Activated CD8-positive, alpha-beta memory T cell treated with anti-CD3 and anti-CD28 coated beads, Interleukin-2, amount 10 ng/mL, durations not matched to agents 7 days and 5 days (primary cell): ENCODE measurements at regions of chr19 and their contacts with region 1.

Region 1: GRCh38 chr19:11482384-11483050 is 1.7 kb upstream of the ELAVL3 start:
- DNase-seq: peak; percentile 91
- ATAC-seq: peak; percentile 79
- H3K4me3 Mint-ChIP-seq: peak overlapping the region; percentile 60
- H3K27ac Mint-ChIP-seq: peak overlapping the region; percentile 77
- H3K4me1 Mint-ChIP-seq: peaks cover 20% of the 10 kb centered on the region
- H3K27me3 Mint-ChIP-seq: peaks cover 25% of the 10 kb centered on the region

Region 2: GRCh38 chr19:11374433-11375142 is 107.9 kb before region 1 on chr19 and contains the start of gene SWSAP1:
- CTCF ChIA-PET with region 1: interaction called, 38 read pairs
- DNase-seq: peak; percentile 99
- ATAC-seq: peak; percentile 92
- H3K4me3 Mint-ChIP-seq: no peak within 1 kb of the TSS
- H3K27ac Mint-ChIP-seq: no peak within 1 kb of the TSS
- H3K4me1 Mint-ChIP-seq: peaks cover 29% of the 10 kb centered on the region
- H3K27me3 Mint-ChIP-seq: no peaks in the 10 kb centered on the region
- total RNA-seq, gene SWSAP1: 2.6 to 3.9 TPM

Region 3: GRCh38 chr19:11422163-11423021 is 60.1 kb before region 1 on chr19:
- CTCF ChIA-PET with region 1: interaction called, 14 read pairs
- DNase-seq: peak; percentile 92
- ATAC-seq: peak; percentile 73
- H3K4me3 Mint-ChIP-seq: peak overlapping the region; percentile 59
- H3K27ac Mint-ChIP-seq: no peak overlapping the region
- H3K4me1 Mint-ChIP-seq: peaks cover 28% of the 10 kb centered on the region
- H3K27me3 Mint-ChIP-seq: peaks cover 61% of the 10 kb centered on the region

Region 4: GRCh38 chr19:11435058-11435832 is 47.3 kb before region 1 on chr19 and contains the starts of genes ODAD3 and PRKCSH:
- CTCF ChIA-PET with region 1: interaction called, 13 read pairs
- DNase-seq: peak; percentile 99
- ATAC-seq: peak; percentile 95
- H3K4me3 Mint-ChIP-seq: peak within 1 kb of the TSS; percentile 100
- H3K27ac Mint-ChIP-seq: peak within 1 kb of the TSS; percentile 96
- H3K4me1 Mint-ChIP-seq: peaks cover 25% of the 10 kb centered on the region
- H3K27me3 Mint-ChIP-seq: peaks cover 4% of the 10 kb centered on the region
- total RNA-seq, gene ODAD3: 0.15 to 0.54 TPM
- total RNA-seq, gene PRKCSH: 278 to 306 TPM

Region 5: DNA sequence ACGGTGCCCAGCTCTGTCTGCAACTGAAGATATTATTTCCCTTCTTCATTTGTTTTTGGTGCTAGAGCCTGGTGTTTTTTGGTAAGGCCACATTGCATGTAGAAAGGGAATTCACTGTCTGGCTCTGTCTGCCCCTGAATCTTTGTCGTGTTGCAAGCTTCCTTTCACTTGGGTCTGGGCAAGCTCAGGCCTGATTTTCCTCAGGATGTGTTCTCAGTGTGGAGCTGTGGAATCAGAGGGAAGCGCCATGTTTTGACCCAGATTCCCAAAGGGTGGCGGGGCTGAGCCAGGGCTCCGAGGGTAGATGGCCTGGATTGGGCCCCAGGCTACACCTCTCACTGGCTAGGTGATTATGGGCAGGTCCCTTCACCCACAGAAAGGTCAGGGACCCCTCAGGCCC is 38.5 kb before region 1 on chr19:
- CTCF ChIA-PET with region 1: interaction called, 11 read pairs
- DNase-seq: no peak
- ATAC-seq: no peak
- H3K4me3 Mint-ChIP-seq: no peak overlapping the region
- H3K27ac Mint-ChIP-seq: no peak overlapping the region
- H3K4me1 Mint-ChIP-seq: peaks cover 4% of the 10 kb centered on the region
- H3K27me3 Mint-ChIP-seq: no peaks in the 10 kb centered on the region

Region 6: DNA sequence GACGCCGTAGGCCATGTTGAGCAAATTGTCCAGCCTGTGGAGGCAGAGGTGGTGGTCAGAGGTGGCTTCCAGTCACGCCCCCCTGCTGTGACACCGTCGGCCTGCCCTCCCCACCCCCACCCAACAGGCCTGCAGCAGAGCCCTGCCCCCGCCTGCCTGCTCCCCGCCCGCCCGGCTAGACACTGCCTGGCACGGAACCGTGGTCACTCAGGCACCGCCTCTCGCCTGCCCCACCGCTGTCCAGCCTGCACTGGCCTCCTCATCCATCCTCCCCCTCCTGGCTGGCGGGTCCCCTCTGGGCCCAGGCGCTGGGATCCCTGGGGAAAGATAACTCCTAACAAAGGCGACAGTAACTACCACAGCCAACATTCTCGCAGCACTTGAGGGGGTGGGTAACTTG is 25.4 kb before region 1 on chr19:
- CTCF ChIA-PET with region 1: interaction called, 11 read pairs
- DNase-seq: no peak
- ATAC-seq: no peak
- H3K4me3 Mint-ChIP-seq: no peak overlapping the region
- H3K27ac Mint-ChIP-seq: no peak overlapping the region
- H3K4me1 Mint-ChIP-seq: no peaks in the 10 kb centered on the region
- H3K27me3 Mint-ChIP-seq: peaks cover 4% of the 10 kb centered on the region